Activated CD8-positive, alpha-beta T cell treated with anti-CD3 and anti-CD28 coated beads for 36 hours (primary cell): ENCODE measurements at regions of chr4 and their contacts with region 1.

Region 1: GRCh38 chr4:129362674-129363274 is 266.8 kb downstream of the C4orf33 start:
- DNase-seq: peak; percentile 69
- ATAC-seq: peak; percentile 37
- H3K4me3 Mint-ChIP-seq: no peak overlapping the region
- H3K27ac Mint-ChIP-seq: no peak overlapping the region
- H3K4me1 Mint-ChIP-seq: no peaks in the 10 kb centered on the region
- H3K27me3 Mint-ChIP-seq: no peaks in the 10 kb centered on the region
- CTCF ChIP-seq: peak; percentile 85

Region 2: DNA sequence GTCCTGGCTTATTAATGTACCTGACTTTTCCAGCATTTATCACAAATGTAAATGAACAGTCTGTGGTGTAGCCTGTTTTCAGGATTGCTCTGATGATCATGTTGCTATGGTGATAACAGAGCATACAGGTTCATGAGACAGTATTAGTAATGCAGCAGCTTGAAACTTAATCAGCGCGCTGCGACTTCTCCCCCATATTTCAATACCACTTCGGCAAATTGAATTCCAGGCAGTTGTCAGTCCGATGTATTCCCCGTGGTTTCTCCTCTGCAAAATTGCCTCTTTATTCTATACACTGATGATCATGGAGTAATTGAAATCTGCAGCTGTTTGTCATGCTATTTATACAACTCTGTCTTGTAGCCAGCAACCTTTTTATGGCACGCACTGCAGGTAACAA is 27.5 kb before region 1 on chr4:
- CTCF ChIA-PET with region 1: no interaction called
- POLR2A ChIA-PET with region 1: no interaction called
- intact Hi-C with region 1: no loop called
- DNase-seq: no peak
- ATAC-seq: no peak
- H3K4me3 Mint-ChIP-seq: no peak overlapping the region
- H3K27ac Mint-ChIP-seq: no peak overlapping the region
- H3K4me1 Mint-ChIP-seq: no peaks in the 10 kb centered on the region
- H3K27me3 Mint-ChIP-seq: peaks cover 2% of the 10 kb centered on the region
- CTCF ChIP-seq: no peak

Region 3: DNA sequence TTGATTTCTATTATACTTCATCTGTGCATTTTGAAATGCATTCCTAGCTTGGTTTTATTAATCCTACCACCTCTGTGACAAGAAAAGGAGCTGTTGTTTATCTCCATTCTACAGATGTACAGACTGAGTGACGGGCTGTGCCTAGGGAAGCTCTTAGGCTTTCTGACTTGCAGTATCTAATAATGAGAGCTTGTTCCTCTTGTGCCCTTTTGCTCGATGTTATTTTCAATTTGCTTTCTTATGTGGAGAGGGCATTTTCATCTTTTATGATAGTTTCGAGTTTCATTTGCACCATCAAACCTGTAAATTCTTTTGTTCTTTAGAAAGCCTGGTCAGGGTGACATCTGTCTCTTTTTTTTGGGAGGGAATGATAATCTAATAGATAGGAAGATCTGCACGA is 10.3 kb before region 1 on chr4:
- CTCF ChIA-PET with region 1: interaction called, 10 read pairs
- POLR2A ChIA-PET with region 1: no interaction called
- intact Hi-C with region 1: no loop called
- DNase-seq: no peak
- ATAC-seq: no peak
- H3K4me3 Mint-ChIP-seq: no peak overlapping the region
- H3K27ac Mint-ChIP-seq: no peak overlapping the region
- H3K4me1 Mint-ChIP-seq: no peaks in the 10 kb centered on the region
- H3K27me3 Mint-ChIP-seq: peaks cover 13% of the 10 kb centered on the region
- CTCF ChIP-seq: no peak

Region 4: DNA sequence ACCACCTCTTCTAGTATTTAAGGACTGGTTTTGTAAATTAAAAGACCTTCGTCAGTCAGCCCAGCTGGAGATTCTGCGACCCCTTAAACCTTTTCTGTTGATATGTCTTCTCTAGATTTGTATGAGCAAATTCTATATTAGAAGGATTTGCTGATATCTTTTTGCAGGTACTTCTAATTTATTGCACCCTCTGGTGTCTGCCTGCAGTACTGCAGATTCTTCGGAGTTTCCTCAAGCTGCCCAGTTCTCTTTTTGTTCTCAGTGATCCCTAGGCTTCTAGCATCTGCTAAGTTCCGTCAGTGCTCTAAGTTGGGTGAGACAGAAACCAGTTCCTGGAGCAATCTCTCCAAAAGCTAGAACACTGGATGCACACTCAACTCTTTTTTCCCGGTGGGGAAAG is 278.4 kb after region 1 on chr4:
- CTCF ChIA-PET with region 1: interaction called, 39 read pairs
- POLR2A ChIA-PET with region 1: no interaction called
- intact Hi-C with region 1: loop called (anchors 2 kb)
- DNase-seq: peak; percentile 64
- ATAC-seq: no peak
- H3K4me3 Mint-ChIP-seq: no peak overlapping the region
- H3K27ac Mint-ChIP-seq: no peak overlapping the region
- H3K4me1 Mint-ChIP-seq: no peaks in the 10 kb centered on the region
- H3K27me3 Mint-ChIP-seq: no peaks in the 10 kb centered on the region
- CTCF ChIP-seq: peak; percentile 69